Activated CD8-positive, alpha-beta memory T cell treated with anti-CD3 and anti-CD28 coated beads, Interleukin-2, amount 10 ng/mL, durations not matched to agents 7 days and 5 days (primary cell): ENCODE measurements at regions of chr13 and their contacts with region 1.

Region 1: GRCh38 chr13:51286135-51287002 is 53.1 kb upstream of the SERPINE3 start:
- DNase-seq: peak; percentile 82
- ATAC-seq: peak; percentile 92
- H3K4me3 Mint-ChIP-seq: no peak overlapping the region
- H3K27ac Mint-ChIP-seq: no peak overlapping the region
- H3K4me1 Mint-ChIP-seq: peaks cover 18% of the 10 kb centered on the region
- H3K27me3 Mint-ChIP-seq: peaks cover 3% of the 10 kb centered on the region

Region 2: GRCh38 chr13:51125498-51126226 is 160.7 kb before region 1 on chr13:
- CTCF ChIA-PET with region 1: interaction called, 105 read pairs
- DNase-seq: peak; percentile 63
- ATAC-seq: peak; percentile 77
- H3K4me3 Mint-ChIP-seq: no peak overlapping the region
- H3K27ac Mint-ChIP-seq: no peak overlapping the region
- H3K4me1 Mint-ChIP-seq: peaks cover 12% of the 10 kb centered on the region
- H3K27me3 Mint-ChIP-seq: peaks cover 30% of the 10 kb centered on the region

Region 3: DNA sequence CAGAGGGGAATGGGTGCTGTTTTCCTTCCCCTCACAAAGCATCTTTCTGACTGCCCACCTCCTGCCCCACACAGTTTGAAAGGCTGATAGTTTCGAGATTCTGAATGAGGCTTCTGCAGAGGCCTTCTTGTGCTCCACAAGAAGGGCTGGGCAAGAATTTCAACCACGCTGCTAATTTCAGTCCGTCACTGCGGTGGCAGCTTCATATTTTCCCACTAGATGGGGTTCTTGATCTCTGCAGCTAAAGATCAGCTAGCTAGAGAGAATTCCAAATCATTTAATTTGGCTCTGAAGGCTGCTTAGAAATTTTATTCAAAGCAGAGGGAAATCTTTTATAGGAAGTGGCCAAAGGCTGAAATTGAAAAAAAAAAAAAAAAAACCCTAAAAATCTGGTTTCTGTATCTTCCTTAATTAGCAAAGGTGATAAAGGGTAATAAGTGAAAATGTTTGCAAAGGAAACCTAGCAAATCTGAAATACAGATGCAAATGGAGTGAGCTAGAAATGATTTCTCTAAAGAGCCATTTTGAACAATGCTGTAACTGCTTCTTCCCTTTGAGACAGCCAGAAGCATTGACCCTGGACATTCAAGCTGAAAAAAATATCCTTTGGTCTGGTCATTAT is 137.3 kb before region 1 on chr13:
- CTCF ChIA-PET with region 1: interaction called, 17 read pairs
- DNase-seq: no peak
- ATAC-seq: no peak
- H3K4me3 Mint-ChIP-seq: no peak overlapping the region
- H3K27ac Mint-ChIP-seq: no peak overlapping the region
- H3K4me1 Mint-ChIP-seq: peaks cover 2% of the 10 kb centered on the region
- H3K27me3 Mint-ChIP-seq: peaks cover 44% of the 10 kb centered on the region

Region 4: DNA sequence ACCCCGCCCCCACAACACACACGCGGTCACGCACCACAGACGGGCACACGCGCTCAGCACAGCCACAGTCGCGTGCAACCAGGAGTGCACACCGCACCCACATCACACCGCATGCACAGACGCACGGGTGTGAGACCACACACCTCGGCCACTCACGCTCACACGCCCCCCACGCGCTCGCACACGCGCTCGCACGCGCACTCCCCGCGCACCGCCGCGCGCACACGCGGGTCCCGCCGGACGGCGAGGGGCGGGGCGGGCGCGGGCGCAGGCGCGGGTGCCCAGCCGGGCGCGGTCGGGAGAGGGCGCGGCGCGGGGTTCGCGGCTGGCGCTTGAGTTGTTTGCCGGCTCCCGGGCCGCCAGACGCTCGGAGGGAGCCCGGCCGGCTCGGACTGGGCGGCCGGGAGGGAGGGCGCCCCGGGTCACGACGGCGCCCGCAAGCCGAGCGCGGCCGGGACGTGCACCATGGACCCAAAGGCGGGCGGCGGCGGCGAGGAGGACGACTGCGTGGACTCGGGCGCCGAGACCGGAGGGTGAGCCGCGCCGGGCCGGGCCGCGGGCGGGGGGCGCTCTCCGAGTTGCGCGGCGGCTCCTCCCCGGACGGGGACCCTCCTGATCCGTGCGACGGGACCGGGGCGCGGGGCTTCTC is 64.2 kb before region 1 on chr13 and contains the start of gene FAM124A:
- CTCF ChIA-PET with region 1: interaction called, 20 read pairs
- DNase-seq: peak; percentile 46
- ATAC-seq: peak; percentile 92
- H3K4me3 Mint-ChIP-seq: peak within 1 kb of the TSS; percentile 72
- H3K27ac Mint-ChIP-seq: no peak within 1 kb of the TSS
- H3K4me1 Mint-ChIP-seq: peaks cover 3% of the 10 kb centered on the region
- H3K27me3 Mint-ChIP-seq: peaks cover 71% of the 10 kb centered on the region
- total RNA-seq, gene FAM124A: 0.09 to 0.26 TPM

Region 5: GRCh38 chr13:51269039-51269438 is 17.3 kb before region 1 on chr13:
- CTCF ChIA-PET with region 1: interaction called, 17 read pairs
- DNase-seq: no peak
- ATAC-seq: no peak
- H3K4me3 Mint-ChIP-seq: no peak overlapping the region
- H3K27ac Mint-ChIP-seq: no peak overlapping the region
- H3K4me1 Mint-ChIP-seq: no peaks in the 10 kb centered on the region
- H3K27me3 Mint-ChIP-seq: peaks cover 18% of the 10 kb centered on the region